Ascending aorta (tissue), 2 donors: ENCODE measurements at regions of chr4 and their contacts with region 1.

Region 1: DNA sequence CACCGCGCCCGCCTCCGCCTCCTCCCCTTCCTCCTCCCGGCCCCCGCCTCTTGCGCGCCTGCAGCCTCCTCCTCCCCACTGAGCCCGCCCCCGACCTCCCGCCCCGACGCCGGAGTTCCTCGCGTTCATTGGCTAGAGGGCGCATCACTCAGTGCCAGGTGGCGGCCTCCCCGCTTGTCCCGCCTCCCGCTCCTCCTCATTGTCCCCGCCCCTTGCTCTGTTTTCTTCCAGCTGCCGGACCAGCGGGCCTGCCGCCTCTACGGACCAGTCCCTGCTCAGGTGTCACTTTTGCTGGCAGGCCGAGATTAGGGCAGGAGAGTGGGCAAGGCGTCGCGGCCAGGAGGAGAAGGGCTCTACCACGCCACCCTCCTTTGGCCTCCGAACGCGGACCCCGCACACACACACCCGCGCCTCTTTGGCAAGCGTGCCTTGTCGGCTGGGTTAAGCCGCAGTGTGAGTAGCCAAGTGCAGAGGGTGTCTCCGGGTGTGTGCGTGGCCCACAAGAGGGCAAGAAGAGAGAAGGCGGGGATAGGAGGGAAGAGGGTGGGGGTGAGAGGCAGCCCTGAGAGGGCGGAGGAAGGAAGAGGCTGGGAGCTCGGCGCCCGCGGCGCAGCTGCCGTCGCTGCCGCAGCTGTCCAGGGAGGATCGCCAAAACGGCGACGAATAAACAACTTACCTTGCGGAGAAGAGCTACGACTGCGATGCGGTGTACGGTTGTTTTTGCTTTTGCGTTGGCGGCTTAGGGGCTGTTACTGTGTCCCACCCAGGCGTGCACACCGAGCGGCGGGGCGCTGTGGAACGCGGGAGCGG is 436 bp upstream of the PPP3CA start:
- DNase-seq: peak; percentile 93 to 99
- H3K4me3 ChIP-seq: peak overlapping the region; percentile 89 to 98
- H3K27ac ChIP-seq: peak overlapping the region; percentile 91 to 95
- H3K4me1 ChIP-seq: peaks cover 0 to 17% of the 10 kb centered on the region in 2 donors
- H3K27me3 ChIP-seq: no peaks in the 10 kb centered on the region
- CTCF ChIP-seq: peak in 1 of 3 experiments; percentile 13

Region 2: DNA sequence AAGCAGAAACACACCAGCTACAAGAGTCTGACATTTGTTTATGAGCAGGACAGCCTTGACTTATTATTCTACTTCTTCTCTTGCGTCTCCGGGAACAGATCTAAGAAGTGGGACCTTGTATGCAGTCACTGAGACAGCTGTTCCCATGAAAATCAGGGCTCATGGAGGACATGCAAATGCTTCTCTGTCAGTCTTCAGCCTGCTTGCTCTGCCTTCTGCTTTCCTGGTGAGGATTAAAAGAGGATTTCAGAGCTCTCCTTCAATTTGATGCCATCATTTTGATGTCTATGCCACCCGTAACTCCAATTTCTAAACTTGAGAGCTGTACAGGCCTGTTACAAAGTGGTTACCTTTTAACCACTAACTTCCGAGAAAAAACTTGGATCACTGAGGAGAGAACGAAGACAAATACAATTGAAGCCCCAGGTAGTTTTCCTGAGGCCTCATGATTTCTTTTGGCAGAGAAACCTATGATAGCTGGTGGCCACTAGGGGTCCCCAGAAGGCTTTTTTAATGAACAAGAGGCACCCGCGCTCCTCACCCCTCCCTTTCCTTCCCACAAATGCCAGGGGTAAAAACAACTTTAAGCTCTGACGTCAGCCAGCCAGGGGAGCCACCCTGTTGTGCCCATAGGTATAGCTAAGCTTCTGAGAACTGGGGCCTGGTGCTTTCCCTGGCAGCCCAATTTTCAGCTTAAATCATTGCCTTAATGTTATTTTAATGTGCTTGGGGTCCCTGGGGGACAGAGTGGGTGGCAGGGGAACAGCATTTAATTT is 1254.5 kb before region 1 on chr4:
- intact Hi-C with region 1: loop called (anchors 2 kb)
- DNase-seq: peak; percentile 62 to 94
- H3K4me3 ChIP-seq: no peak overlapping the region
- H3K27ac ChIP-seq: peak overlapping the region; percentile 37 to 64
- H3K4me1 ChIP-seq: peaks cover 0 to 9% of the 10 kb centered on the region in 2 donors
- H3K27me3 ChIP-seq: no peaks in the 10 kb centered on the region
- CTCF ChIP-seq: peak; percentile 45 to 88 (median 84)

Region 3: GRCh38 chr4:101187841-101188240 is 159.9 kb before region 1 on chr4:
- intact Hi-C with region 1: loop called (anchors 2 kb)
- DNase-seq: no peak
- H3K4me3 ChIP-seq: no peak overlapping the region
- H3K27ac ChIP-seq: no peak overlapping the region
- H3K4me1 ChIP-seq: peaks cover 4 to 14% of the 10 kb centered on the region in 2 donors
- H3K27me3 ChIP-seq: no peaks in the 10 kb centered on the region
- CTCF ChIP-seq: no peak

Region 4: DNA sequence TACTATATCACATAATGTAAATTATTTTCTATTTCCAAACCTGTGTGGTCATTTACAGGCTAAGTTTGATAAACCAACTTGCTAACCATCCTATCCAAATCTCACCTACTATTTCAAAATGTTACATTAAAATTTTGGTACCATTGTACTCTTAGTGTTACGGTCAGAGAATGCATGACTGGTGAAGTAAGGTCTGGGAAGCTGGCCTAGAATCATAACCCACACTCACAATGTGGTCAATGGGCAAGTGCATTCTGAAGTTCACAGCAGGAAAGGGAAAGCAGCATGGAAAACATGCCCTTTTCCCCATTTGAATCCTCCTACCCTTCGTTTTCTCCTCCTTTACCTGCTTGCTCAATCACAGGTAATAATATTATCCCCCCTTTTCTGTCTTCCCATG is 54.9 kb before region 1 on chr4:
- intact Hi-C with region 1: loop called (anchors 5 kb)
- DNase-seq: no peak
- H3K4me3 ChIP-seq: no peak overlapping the region
- H3K27ac ChIP-seq: peak overlapping the region in 1 of 2 donors; percentile 60
- H3K4me1 ChIP-seq: peaks cover 0 to 18% of the 10 kb centered on the region in 2 donors
- H3K27me3 ChIP-seq: no peaks in the 10 kb centered on the region
- CTCF ChIP-seq: no peak

Region 5: GRCh38 chr4:101419324-101420135 is 71.8 kb after region 1 on chr4:
- intact Hi-C with region 1: no loop called
- DNase-seq: no peak
- H3K4me3 ChIP-seq: no peak overlapping the region
- H3K27ac ChIP-seq: no peak overlapping the region
- H3K4me1 ChIP-seq: no peaks in the 10 kb centered on the region
- H3K27me3 ChIP-seq: no peaks in the 10 kb centered on the region
- CTCF ChIP-seq: no peak

Region 6: GRCh38 chr4:101660607-101661006 is 312.8 kb after region 1 on chr4:
- intact Hi-C with region 1: no loop called
- DNase-seq: no peak
- H3K4me3 ChIP-seq: no peak overlapping the region
- H3K27ac ChIP-seq: no peak overlapping the region
- H3K4me1 ChIP-seq: no peaks in the 10 kb centered on the region
- H3K27me3 ChIP-seq: no peaks in the 10 kb centered on the region
- CTCF ChIP-seq: no peak

Region 7: DNA sequence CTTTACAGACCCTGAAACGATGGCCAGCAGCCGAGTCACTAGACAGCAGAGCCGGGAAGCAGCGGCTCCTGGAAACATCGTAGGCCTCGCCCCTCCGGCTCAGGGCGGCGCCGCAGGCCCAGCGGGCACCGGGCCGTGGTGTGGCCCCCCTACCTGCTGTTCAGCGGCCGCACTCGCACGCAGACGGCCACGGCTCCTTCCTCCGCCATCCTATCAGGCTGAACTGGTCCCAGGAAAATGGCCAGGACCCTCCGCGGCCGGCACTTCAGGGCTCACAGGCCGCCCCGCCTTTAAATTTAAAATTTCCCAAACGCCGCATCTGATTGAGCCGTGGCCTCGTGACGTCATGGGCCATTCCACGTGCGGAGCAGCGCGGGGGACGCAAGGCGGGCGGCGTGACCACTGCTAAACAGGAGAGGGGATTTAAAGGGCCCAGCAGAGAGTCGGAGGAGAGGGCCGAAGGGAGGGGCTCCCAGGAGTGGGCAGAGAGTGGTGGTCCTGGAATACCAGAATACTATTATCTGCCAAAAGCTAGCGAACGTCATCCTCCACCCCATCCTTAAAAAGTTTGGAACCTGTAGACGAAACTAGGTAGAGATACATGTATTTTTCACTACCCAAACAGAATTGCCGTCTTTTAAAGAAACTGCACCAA is 1850.5 kb after region 1 on chr4 and contains the start of gene CENPE:
- intact Hi-C with region 1: loop called (anchors 10 kb)
- DNase-seq: peak; percentile 36 to 91
- H3K4me3 ChIP-seq: peak within 1 kb of the TSS; percentile 61 to 99
- H3K27ac ChIP-seq: peak within 1 kb of the TSS; percentile 56 to 67
- H3K4me1 ChIP-seq: peaks cover 0 to 5% of the 10 kb centered on the region in 2 donors
- H3K27me3 ChIP-seq: no peaks in the 10 kb centered on the region
- CTCF ChIP-seq: no peak
- total RNA-seq, gene CENPE: not detected